ENCODE measurements at regions of chr4 and their contacts with region 1.

Region 1: DNA sequence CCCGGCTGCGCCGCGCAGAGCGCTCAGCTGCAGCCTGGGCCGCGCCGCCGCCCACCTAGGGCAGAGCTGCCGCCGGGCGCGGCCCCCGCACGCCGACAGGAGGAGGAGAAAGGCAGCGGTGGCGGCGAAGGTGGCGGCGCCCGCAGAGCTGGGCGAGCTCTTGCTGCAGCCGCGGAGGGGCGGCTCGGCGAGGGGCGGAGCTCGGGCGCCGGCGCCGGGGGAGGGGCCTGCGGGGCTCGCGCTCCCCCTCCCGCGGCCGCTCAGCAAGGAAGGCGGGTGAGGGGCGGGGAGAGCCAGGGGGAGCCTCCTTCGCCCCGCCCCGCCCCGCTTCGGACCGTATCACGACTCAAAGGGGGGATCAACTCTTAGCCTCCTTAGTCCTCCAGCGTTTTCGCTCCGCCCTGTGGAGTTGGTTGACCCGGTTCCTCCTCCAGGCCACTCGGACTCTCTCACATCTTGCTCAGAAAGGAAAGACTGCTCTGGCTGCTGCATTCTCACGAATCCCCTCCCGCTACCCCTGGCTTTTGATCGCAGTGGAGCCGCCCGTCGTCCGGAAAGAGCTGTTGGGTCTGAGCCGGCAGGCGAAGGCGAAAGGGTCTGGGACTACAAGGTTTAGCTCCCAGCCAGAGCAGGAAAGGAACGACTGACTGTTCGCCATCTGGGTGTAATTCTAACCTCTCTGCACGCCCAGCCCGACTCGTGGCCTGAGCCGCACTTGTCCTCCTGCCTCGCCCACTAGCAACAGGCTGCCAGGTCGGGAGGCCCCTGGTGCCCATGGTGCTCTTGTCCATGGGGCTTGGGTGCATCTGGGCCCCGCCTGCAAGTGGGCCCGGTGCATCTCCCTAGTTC is at the start of gene ATP8A1:
- DNase-seq: peak; percentile 99
- H3K4me3 ChIP-seq: peak within 1 kb of the TSS; percentile 71 to 90
- H3K27ac ChIP-seq: peak within 1 kb of the TSS; percentile 71 to 98
- H3K4me1 ChIP-seq: peaks cover 11 to 20% of the 10 kb centered on the region in 2 experiments; a peak in 2 of 4 replicates
- H3K27me3 ChIP-seq: no peaks in the 10 kb centered on the region
- CTCF ChIP-seq: no peak
- EP300 ChIP-seq: peak in 1 of 2 experiments; percentile 51; a peak in 1 of 4 replicates
- RAD21 ChIP-seq: no peak
- polyA plus RNA-seq, gene ATP8A1: 0.38 and 0.78 TPM in 2 replicates

Region 2: DNA sequence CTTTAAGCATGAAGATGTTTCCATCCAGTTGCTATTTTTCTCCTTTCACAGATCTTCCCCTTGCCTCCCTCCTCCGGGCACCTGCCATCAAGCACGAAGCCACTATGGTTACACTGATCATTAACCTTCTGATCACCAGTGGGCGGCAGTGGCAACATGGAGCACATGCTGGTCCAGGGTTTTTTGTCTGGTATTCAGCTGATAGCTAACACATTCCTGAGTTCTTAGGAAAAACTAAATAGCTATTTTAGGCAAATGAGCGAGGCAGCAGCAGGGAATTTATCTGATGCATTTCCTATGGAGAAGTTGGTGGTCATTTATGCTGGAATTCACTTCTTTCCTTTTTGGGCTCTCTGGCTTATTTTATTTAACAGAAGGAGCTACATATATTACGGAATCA is 237.0 kb before region 1 on chr4:
- CTCF ChIA-PET with region 1: no interaction called
- POLR2A ChIA-PET with region 1: no interaction called
- DNase-seq: no peak
- H3K4me3 ChIP-seq: no peak overlapping the region
- H3K27ac ChIP-seq: no peak overlapping the region
- H3K4me1 ChIP-seq: no peaks in the 10 kb centered on the region; a peak in 1 of 4 replicates
- H3K27me3 ChIP-seq: no peaks in the 10 kb centered on the region
- CTCF ChIP-seq: no peak
- EP300 ChIP-seq: no peak
- RAD21 ChIP-seq: no peak

Region 3: GRCh38 chr4:42646013-42646784 is 11.0 kb before region 1 on chr4:
- CTCF ChIA-PET with region 1: interaction called, 6 read pairs
- POLR2A ChIA-PET with region 1: interaction called, 14 read pairs
- DNase-seq: no peak
- H3K4me3 ChIP-seq: no peak overlapping the region
- H3K27ac ChIP-seq: peak overlapping the region in 1 of 2 experiments; percentile 36; a peak in 1 of 4 replicates
- H3K4me1 ChIP-seq: peaks cover 0 to 21% of the 10 kb centered on the region in 2 experiments; a peak in 2 of 4 replicates
- H3K27me3 ChIP-seq: no peaks in the 10 kb centered on the region; the same call in 1 of the 2 replicates
- CTCF ChIP-seq: no peak
- EP300 ChIP-seq: no peak
- RAD21 ChIP-seq: no peak

Measured in SK-N-SH (cell line).